ENCODE measurements at regions of chr18 and their contacts with region 1.

Region 1: GRCh38 chr18:616380-616995 is 19.7 kb downstream of the CLUL1 start:
- DNase-seq: no peak
- H3K4me3 ChIP-seq: no peak overlapping the region
- H3K27ac ChIP-seq: no peak overlapping the region
- H3K4me1 ChIP-seq: no peaks in the 10 kb centered on the region
- H3K27me3 ChIP-seq: no peaks in the 10 kb centered on the region
- CTCF ChIP-seq: peak; percentile 25 to 72 (median 58)
- POLR2A ChIP-seq: no peak

Region 2: DNA sequence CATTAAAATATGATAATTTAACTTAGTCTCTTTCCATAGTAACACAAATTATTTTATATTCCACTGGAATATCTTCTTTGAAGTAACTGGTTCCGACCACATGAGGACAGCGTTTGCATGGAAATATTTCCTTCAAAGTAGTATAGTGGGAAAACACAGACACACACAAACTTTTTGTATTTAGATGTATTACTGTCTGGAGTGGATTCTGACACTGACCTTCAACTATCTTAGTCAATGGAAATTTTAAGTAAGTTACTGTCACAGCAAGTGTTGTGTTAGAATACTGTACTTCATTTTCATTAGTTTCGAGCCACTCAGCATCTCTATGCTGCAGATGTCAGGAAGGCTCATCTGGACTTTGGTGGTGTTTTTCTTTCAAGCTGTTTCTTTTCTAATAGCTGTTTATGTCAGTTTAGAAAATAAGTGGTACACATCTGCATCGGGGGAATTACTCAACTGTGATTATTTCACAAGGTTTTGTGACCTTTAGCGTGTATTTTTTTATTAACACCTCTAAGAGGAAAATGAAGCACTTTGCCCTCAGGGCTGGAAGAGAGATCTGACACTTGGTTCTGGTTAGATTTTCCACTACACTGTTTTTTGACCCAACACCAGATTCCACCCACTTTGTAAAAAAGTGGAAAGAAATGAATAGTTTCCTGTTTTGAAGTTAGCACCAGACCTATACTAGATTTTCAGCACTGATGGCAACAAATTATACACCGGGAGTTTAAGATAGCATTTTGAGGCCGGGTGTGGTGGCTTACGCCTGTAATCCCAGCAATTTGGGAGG is 329.8 kb before region 1 on chr18:
- intact Hi-C with region 1: loop called (anchors 10 kb)
- DNase-seq: no peak
- H3K4me3 ChIP-seq: no peak overlapping the region
- H3K27ac ChIP-seq: no peak overlapping the region
- H3K4me1 ChIP-seq: no peaks in the 10 kb centered on the region
- H3K27me3 ChIP-seq: peaks cover 0 to 5% (median 0%) of the 10 kb centered on the region in 4 donors
- CTCF ChIP-seq: peak in 4 of 6 experiments; percentile 22 to 54 (median 40)
- POLR2A ChIP-seq: no peak

Region 3: GRCh38 chr18:415617-416612 is 200.6 kb before region 1 on chr18:
- intact Hi-C with region 1: no loop called
- DNase-seq: no peak
- H3K4me3 ChIP-seq: no peak overlapping the region
- H3K27ac ChIP-seq: no peak overlapping the region
- H3K4me1 ChIP-seq: peaks cover 0 to 2% (median 0%) of the 10 kb centered on the region in 3 donors
- H3K27me3 ChIP-seq: no peaks in the 10 kb centered on the region
- CTCF ChIP-seq: no peak
- POLR2A ChIP-seq: no peak

Region 4: GRCh38 chr18:434410-434809 is 182.1 kb before region 1 on chr18:
- intact Hi-C with region 1: no loop called
- DNase-seq: no peak
- H3K4me3 ChIP-seq: no peak overlapping the region
- H3K27ac ChIP-seq: no peak overlapping the region
- H3K4me1 ChIP-seq: peaks cover 0 to 9% (median 0%) of the 10 kb centered on the region in 3 donors
- H3K27me3 ChIP-seq: no peaks in the 10 kb centered on the region
- CTCF ChIP-seq: no peak
- POLR2A ChIP-seq: no peak

Region 5: DNA sequence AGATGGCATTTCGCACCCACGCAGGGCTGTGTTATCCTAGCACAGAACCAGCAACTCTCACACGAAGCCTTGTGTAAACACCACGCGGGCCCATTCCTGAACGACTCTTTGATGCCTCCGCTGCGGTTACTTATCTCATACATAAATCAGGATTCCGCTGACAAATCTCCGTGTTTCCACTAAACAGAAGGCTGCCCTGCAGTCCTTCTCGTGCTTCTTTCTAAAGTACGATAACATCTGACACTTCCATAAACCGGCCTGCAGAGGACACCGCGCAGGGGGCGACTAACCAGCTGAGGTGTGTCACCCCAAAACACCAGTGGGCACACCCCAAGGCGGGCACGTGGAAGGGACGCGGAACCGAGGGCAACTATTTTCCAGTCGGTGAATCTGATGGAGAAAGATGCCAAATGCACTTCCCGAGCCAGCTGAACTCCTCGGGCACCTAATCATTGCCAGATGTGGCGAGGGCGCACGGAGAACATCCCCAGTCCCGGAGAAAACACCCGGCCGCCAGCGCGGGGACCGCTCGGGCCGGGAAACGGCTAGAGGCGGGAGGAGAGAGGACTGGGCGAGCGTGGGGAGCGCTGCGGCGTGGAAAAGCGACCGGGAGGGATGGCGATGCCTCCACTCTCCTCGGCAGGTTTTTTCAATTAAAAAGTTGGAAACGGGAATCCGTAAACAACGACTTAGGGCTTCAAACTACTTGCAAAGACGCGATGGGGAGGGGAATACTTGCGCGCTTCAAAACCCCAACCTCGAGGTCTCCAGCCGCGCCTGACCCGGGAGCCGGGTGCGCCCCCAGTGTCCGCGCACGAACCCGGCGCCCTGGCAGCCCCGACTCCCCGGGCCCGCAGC is 116.7 kb before region 1 on chr18:
- intact Hi-C with region 1: loop called (anchors 10 kb)
- DNase-seq: no peak
- H3K4me3 ChIP-seq: peak overlapping the region; percentile 41 to 67 (median 54)
- H3K27ac ChIP-seq: peak overlapping the region in 3 of 4 donors; percentile 52 to 69 (median 68)
- H3K4me1 ChIP-seq: peaks cover 4 to 24% (median 8%) of the 10 kb centered on the region in 3 donors
- H3K27me3 ChIP-seq: peaks cover 0 to 55% (median 0%) of the 10 kb centered on the region in 4 donors
- CTCF ChIP-seq: no peak
- POLR2A ChIP-seq: no peak